Mammary epithelial cell (primary cell): ENCODE measurements at regions of chr1 and their contacts with region 1.

Region 1: DNA sequence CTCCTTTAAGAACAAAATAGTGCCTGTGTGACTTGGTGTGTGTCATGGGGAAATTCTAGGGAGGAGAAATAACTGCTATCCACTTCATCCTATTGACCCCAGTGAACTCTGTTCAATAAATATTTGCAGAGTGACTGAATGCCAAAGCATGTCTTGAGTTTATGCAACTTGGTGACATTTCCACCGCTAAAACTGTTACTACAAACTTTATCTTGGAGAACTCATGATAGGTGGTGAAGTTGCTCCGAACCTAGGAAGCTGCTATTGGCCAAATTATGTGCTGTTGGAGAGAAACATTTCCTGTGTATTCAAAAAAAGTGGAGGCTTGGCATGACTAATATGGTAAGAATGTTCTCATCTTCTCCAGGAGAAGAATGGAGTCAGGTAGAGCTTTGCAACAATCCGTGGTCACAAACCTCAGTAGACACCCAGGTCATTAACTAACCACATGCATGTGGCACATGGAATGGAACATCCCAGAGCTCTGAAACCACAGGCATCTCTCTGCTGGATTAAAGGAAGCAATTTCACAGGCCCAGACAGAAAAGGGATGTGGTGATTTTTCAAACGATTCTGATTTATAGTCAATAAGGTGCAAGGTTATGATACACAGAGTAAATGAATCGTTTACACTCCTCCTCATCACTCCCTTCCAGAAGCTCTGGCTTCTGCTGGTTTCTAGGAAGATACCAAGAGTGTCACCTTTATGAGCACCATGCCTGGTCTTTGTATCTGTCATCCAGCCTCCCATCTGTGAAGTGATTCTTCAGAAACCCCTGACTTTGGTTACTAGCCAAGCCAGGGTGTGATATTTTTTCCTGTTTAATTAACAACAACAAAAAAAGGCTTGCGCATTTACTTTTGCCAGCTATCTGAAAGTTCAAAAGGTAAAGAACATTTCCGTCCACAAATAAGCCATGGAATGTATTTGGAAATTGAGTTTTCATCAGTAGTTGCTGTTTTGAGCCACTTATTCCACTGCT is 361.1 kb downstream of the TGFB2 start:
- DNase-seq: peak; percentile 99
- H3K4me3 ChIP-seq: no peak overlapping the region
- H3K27ac ChIP-seq: peak overlapping the region; percentile 98
- H3K4me1 ChIP-seq: peaks cover 39% of the 10 kb centered on the region
- H3K27me3 ChIP-seq: no peaks in the 10 kb centered on the region
- CTCF ChIP-seq: no peak

Region 2: DNA sequence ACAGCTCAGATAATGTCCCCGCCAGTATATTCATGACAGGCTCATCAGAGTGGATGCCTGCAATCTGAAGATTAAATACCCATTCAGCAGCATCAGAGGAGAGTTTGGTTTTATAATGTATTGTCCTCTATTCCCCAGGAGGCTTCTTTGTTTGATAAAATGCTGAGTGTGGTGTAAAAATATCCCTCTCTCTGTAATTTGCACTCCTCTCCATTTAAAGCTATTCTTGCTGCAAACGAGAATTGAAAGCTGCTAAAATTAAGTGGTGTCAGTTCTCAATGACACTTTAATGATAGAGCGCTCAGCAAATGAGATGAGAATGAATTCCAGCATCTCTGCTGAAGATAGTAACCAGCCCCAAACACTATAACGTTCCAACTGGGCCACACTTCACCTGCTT is 626.9 kb before region 1 on chr1:
- CTCF ChIA-PET with region 1: no interaction called
- dilution Hi-C with region 1: no loop called
- in situ Hi-C with region 1: no loop called
- intact Hi-C with region 1: no loop called
- DNase-seq: no peak
- H3K4me3 ChIP-seq: no peak overlapping the region
- H3K27ac ChIP-seq: no peak overlapping the region
- H3K4me1 ChIP-seq: no peaks in the 10 kb centered on the region
- H3K27me3 ChIP-seq: no peaks in the 10 kb centered on the region
- CTCF ChIP-seq: no peak

Region 3: GRCh38 chr1:218480137-218480536 is 226.1 kb before region 1 on chr1:
- CTCF ChIA-PET with region 1: no interaction called
- dilution Hi-C with region 1: no loop called
- in situ Hi-C with region 1: no loop called
- intact Hi-C with region 1: loop called (anchors 5 kb)
- DNase-seq: peak; percentile 92
- H3K4me3 ChIP-seq: no peak overlapping the region
- H3K27ac ChIP-seq: peak overlapping the region; percentile 93
- H3K4me1 ChIP-seq: peaks cover 54% of the 10 kb centered on the region
- H3K27me3 ChIP-seq: no peaks in the 10 kb centered on the region
- CTCF ChIP-seq: no peak

Region 4: DNA sequence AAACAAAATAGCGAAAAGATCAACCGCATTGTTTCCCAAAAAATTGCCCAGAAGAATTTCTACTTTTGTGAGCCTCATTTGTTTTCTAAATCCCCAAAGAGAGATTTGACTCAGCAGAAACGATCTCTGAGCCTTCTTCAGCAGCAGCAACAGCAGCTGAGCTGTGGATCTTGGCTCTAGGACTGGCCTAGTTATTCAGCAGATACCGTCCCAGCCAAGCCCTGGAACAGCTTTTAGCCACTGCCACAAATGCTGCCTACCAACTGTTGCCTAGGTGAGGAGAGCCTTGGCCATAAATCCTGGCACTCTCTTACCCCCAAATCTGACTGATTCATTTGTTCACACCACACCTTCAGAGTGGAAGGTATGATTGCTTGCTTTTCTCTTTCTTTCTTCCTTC is 41.0 kb before region 1 on chr1:
- CTCF ChIA-PET with region 1: interaction called, 7 read pairs
- dilution Hi-C with region 1: no loop called
- in situ Hi-C with region 1: no loop called
- intact Hi-C with region 1: loop called (anchors 5 kb)
- DNase-seq: no peak
- H3K4me3 ChIP-seq: no peak overlapping the region
- H3K27ac ChIP-seq: peak overlapping the region; percentile 4
- H3K4me1 ChIP-seq: peaks cover 34% of the 10 kb centered on the region
- H3K27me3 ChIP-seq: no peaks in the 10 kb centered on the region
- CTCF ChIP-seq: no peak

Region 5: DNA sequence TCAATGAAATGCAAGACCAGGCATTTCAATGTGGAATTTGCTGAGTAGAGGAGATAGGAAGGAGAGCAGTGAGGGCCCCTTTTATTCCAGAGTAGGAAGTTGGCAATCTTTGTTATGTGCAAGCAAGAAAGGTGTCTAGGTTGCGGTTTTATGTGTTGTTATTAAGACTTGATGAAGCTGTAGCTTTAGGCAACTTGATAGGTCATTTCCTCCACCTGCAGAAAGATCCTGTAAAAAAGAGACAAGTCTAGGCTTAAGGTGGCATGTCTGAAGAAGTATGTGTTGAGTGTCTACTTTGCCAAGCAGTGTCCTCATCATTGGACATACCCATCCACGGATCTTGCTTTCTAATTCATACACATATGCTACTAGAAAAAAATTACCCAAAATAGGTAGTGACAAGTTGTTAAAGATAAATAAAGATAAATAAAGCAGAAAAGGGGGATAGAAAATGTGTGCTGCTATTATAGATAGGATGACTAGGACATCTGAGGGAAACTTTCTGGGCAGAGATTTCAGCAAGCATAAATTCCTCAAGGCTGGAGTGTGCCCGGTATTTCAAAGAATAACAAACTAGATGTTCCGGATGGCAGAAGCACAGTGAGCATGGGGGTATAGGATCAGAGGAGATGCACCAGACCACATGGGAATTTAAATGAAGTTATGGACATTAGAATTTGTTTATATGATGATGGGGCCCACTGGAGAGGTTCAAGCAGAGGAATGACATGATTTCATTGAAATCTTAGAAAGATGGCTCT is 26.0 kb before region 1 on chr1:
- CTCF ChIA-PET with region 1: no interaction called
- dilution Hi-C with region 1: no loop called
- in situ Hi-C with region 1: no loop called
- intact Hi-C with region 1: loop called (anchors 1 kb)
- DNase-seq: peak; percentile 63
- H3K4me3 ChIP-seq: no peak overlapping the region
- H3K27ac ChIP-seq: peak overlapping the region; percentile 76
- H3K4me1 ChIP-seq: peaks cover 47% of the 10 kb centered on the region
- H3K27me3 ChIP-seq: no peaks in the 10 kb centered on the region
- CTCF ChIP-seq: no peak

Region 6: DNA sequence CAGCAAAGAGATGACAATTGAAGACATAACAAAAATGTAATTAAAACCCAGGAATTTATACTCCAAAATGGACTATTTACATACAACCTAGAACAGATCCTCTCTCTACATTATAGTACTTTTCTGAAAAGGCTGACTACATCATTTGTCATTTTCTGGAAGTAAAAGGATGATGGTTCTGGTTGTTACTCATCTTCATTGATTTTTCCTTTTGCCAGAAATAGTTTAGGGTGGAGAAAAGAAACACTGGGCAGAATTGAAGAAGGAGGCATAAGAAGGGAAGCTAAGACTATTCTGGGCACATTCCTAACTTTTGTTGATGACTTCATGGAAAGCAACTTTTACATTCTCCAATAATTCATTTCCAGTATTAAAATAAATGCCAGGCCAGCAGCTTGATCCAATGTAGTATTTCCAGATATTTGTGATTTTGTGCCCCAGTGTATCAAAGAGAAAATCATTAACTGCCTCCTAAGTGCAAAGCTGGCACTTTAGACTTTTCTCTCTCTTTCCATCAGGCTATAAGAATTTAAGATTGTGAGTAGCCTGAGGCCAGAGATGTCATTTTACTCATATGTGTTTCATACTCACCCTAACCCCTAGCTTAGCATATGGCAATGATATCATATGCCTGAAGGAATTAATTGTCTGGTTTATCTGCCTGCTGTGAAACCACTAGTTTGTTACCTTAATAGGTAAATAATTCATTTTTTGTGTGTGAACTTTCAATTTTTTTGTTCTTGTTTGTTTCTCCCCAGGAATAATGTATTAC is 98.0 kb after region 1 on chr1:
- CTCF ChIA-PET with region 1: no interaction called
- dilution Hi-C with region 1: no loop called
- in situ Hi-C with region 1: no loop called
- intact Hi-C with region 1: loop called (anchors 1 kb)
- DNase-seq: peak; percentile 45
- H3K4me3 ChIP-seq: no peak overlapping the region
- H3K27ac ChIP-seq: peak overlapping the region; percentile 3
- H3K4me1 ChIP-seq: peaks cover 8% of the 10 kb centered on the region
- H3K27me3 ChIP-seq: no peaks in the 10 kb centered on the region
- CTCF ChIP-seq: no peak

Region 7: DNA sequence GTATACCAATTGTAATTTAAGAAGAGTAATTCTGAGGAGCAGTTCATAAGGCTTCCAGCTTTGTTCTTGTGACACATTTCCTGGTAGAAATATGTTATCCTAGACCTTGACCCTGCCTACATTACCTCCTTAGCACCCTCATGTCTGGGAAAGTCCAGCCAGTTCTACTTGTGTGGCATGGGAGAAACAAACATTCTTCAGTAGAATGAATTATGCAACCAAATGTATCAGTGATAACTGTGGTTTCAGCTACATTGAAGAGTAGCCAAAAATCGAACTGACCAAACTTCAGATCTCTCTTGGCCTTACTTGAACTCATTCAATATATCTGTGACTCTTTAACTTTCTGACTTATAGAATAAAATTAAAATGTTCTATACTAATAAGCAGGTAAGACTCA is 159.4 kb after region 1 on chr1:
- CTCF ChIA-PET with region 1: no interaction called
- dilution Hi-C with region 1: no loop called
- in situ Hi-C with region 1: no loop called
- intact Hi-C with region 1: loop called (anchors 10 kb)
- DNase-seq: peak; percentile 79
- H3K4me3 ChIP-seq: no peak overlapping the region
- H3K27ac ChIP-seq: no peak overlapping the region
- H3K4me1 ChIP-seq: peaks cover 11% of the 10 kb centered on the region
- H3K27me3 ChIP-seq: no peaks in the 10 kb centered on the region
- CTCF ChIP-seq: no peak